ENCODE measurements at regions of chr1 and their contacts with region 1.

Region 1: GRCh38 chr1:60281360-60281932 is 207.9 kb upstream of the C1orf87 start:
- DNase-seq: peak; percentile 68
- H3K4me3 ChIP-seq: no peak overlapping the region
- H3K27ac ChIP-seq: no peak overlapping the region
- H3K4me1 ChIP-seq: no peaks in the 10 kb centered on the region
- H3K27me3 ChIP-seq: no peaks in the 10 kb centered on the region
- CTCF ChIP-seq: peak; percentile 80

Region 2: DNA sequence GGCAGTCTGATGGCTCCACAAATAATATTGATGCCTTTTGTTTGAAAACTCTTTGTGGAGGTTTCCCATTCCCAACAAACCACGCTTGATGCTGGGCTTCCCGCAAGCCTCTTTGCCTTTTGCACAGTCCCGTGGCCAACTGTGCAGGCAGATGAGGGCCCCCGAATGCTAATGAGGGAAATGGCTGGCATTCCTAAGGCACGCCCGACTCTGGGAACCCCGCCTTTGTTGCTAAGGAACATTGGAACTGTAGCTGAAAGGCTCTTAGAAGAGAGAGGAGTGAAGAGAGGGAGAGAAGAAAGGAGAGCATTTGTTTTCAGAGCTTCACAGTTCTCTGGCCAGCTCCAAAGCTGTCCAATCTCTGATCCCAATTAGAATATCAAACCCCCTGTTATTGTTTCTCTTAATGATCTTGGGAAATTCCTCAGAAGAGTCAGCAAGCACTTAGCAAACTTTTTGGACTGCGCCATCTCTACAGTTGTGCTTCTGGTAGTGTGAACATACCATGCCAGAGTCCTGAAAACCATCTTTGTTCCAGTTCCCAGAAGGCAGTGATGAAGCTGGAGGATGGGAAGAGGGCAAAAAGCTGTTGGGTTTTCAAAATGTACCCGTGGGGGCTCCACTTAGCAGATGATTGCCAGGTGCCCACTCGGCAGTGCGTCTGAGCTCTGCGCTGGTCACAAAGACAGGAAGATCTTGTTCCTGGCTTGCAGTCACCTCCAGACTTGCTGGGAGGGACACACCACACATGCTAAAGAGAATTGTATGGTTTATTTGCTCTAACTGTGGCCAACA is 294.7 kb before region 1 on chr1:
- intact Hi-C with region 1: loop called (anchors 10 kb)
- DNase-seq: no peak
- H3K4me3 ChIP-seq: no peak overlapping the region
- H3K27ac ChIP-seq: no peak overlapping the region
- H3K4me1 ChIP-seq: no peaks in the 10 kb centered on the region
- H3K27me3 ChIP-seq: no peaks in the 10 kb centered on the region
- CTCF ChIP-seq: no peak

Region 3: GRCh38 chr1:60088620-60089155 is 192.8 kb before region 1 on chr1:
- intact Hi-C with region 1: no loop called
- DNase-seq: no peak
- H3K4me3 ChIP-seq: no peak overlapping the region
- H3K27ac ChIP-seq: no peak overlapping the region
- H3K4me1 ChIP-seq: no peaks in the 10 kb centered on the region
- H3K27me3 ChIP-seq: no peaks in the 10 kb centered on the region
- CTCF ChIP-seq: no peak

Region 4: DNA sequence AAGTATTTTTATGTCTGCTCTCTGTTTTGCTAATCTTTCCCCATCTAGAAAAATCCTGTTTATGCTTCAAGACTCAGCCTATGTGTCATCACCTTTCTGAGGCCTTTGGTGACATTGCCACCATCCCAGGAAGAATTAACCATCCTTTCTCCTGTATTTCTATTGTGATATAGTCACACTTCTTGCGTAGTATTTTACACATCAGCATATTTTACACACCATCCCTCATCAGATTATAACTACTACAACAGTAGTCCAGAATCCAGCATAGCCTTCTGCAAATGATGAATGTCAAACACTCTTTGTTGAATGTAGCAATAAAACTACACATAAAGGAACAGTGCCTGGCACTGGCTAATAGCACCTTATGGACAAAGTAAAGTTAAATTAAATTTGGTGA is 67.4 kb after region 1 on chr1:
- intact Hi-C with region 1: no loop called
- DNase-seq: no peak
- H3K4me3 ChIP-seq: no peak overlapping the region
- H3K27ac ChIP-seq: no peak overlapping the region
- H3K4me1 ChIP-seq: no peaks in the 10 kb centered on the region
- H3K27me3 ChIP-seq: no peaks in the 10 kb centered on the region
- CTCF ChIP-seq: no peak

Region 5: DNA sequence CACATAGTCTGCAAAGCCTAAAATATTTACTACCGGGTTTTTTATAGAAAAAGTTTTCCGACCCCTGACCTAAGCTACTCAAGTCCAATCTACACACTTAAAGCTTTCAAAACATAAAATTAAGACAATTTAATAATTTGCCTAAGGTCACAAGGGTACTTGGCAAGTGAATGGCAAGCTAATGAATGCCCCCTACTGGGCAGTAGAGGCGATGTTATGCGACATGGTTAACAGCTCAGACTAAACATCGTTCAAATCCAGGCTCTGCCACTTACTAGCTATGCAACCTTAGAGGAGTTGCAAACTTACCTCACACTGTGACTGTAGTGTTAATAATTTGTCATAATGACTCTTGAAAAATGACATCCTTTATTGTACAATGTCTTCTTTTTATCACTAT is 483.8 kb after region 1 on chr1:
- intact Hi-C with region 1: loop called (anchors 10 kb)
- DNase-seq: peak; percentile 30
- H3K4me3 ChIP-seq: no peak overlapping the region
- H3K27ac ChIP-seq: no peak overlapping the region
- H3K4me1 ChIP-seq: no peaks in the 10 kb centered on the region
- H3K27me3 ChIP-seq: no peaks in the 10 kb centered on the region
- CTCF ChIP-seq: peak; percentile 43

Measured in colonic mucosa (tissue), 4 donors.